ENCODE measurements at regions of chr10 and their contacts with region 1.

Region 1: DNA sequence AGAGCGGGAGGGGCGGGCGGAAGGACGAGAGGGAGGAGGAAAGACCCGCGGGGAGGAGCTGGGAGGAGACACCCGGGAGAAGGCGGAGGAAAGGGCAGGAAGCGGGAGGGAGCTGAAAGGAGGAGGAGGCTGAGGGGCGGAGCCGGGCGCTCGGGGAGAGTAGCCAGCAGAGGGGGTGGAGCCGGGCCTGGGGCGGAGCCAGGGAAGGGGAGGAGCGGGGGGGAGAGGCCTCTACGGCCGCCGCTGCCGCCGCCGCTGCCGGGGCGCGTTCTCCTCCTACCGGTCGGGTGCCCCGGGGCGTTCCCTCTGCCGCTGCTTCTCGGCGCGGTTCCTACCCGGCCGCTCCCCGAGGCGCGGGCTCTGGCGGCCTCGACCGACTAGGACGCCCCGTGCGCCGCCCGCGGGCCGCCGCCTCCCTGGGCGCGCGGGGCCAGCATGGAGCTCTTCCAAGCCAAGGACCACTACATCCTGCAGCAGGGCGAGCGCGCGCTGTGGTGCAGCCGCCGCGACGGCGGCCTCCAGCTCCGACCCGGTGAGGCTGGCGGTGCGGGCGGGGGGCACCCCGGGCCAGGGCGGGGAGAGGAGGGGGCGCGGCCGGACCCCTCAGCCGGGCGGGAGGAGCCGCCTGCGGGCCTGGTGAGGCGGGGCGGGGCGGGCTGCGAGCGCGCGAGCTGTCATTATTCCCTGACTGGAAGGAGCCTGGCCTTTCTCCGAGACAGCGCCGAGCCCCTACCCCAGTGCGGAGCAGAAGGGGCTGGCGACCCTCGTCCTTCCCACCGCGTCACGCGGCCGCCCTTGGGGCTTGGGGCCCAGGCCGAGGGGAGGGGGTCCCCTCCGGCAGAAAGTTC is at the start of gene INPP5F:
- DNase-seq: peak; percentile 96 to 100 (median 99)

Region 2: GRCh38 chr10:119103903-119104652 is 622.0 kb before region 1 on chr10 and contains the start of gene DENND10:
- intact Hi-C with region 1: loop called (anchors 5 kb)
- DNase-seq: peak; percentile 72 to 97 (median 84)

Region 3: DNA sequence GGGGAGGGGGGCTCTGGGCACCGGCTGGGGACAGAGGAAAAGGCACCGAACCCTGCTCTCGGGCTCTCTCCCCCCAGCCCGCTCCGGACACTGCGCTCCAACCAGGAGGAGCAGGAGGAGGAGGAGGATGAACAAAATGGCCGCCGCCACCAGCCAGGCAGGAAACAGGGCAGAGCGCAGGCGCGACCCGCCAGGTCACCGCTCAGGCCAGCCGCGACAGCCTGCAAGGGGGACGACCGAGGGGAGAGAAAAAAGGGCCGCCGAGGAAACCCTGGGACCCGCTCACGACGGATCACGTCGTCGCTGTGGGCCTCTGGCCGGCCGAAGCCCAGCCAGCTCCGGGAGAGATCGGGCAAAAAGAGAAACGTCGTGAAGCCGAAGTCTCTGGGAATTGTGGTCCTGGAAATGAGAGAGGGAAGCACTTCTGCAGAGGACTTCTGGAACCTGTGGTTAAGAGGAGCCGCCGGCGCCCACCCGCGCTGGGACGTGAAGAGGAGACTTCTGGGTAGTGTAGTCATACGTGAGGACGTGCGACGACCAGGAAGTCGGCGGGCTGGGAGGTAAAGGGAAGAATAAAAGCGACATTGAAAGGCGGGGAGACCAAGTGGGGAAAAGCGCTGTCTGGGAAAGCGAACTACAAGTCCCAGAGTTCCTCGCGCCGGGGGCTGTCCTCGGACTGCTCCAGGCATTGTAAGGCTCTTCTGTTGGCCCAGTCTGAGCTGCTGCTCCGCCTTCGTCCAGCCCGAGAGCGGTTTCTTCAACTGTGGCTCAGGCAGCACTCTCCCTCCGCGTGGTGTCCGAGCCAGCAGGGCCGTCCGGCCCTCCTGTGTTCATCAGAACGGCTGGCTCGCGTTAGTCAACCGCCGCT is 129.3 kb before region 1 on chr10 and contains the start of gene TIAL1:
- intact Hi-C with region 1: loop called (anchors 10 kb)
- DNase-seq: peak; percentile 97 to 100 (median 99)

Region 4: GRCh38 chr10:119686439-119687191 is 39.4 kb before region 1 on chr10:
- intact Hi-C with region 1: loop called (anchors 2 kb)
- DNase-seq: peak; percentile 54 to 97 (median 82)

Region 5: DNA sequence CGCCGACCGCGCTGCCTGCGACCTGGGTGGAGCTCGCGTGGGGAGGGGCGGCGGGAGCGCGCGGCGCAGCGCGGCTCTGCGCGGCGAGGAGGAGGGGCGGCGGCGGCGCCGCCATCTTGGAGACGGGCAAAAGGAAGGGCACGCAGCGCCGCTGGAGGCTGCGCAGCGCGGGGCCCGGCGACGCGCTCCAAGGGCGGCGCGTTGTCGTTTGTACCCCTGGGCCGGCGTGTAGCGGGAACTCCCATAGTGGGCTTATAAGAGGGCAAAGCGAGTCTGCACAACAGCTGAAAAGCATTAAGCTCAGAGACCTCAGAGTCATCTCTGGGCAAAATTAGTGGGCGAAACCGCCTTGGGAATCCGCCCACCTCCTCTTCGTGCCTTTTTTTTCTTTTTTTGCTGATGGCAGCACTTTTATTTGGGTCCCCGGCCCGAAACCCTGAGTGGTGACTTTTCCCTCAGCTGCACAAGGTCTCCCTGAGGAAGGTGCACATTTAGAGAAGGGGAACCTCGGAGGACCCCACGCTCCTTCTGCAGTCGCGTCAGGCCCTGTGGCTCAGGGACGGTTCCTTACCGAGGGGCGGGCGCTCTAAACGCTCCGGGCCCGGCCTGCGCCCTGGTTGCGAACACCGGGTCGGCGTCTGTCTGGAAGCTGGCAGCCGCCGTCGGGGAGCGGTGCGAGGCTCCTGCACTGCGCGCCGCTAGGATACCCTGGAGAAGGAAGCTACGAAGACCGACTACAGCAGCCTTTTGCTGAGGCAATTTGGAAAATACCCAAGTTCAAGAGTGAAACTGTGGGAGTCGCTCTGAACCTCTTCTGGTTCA is 147.0 kb after region 1 on chr10:
- intact Hi-C with region 1: loop called (anchors 5 kb)
- DNase-seq: peak; percentile 80 to 98 (median 85)